Ovary (tissue), 10 donors: ENCODE measurements at regions of chr2 and their contacts with region 1.

Region 1: DNA sequence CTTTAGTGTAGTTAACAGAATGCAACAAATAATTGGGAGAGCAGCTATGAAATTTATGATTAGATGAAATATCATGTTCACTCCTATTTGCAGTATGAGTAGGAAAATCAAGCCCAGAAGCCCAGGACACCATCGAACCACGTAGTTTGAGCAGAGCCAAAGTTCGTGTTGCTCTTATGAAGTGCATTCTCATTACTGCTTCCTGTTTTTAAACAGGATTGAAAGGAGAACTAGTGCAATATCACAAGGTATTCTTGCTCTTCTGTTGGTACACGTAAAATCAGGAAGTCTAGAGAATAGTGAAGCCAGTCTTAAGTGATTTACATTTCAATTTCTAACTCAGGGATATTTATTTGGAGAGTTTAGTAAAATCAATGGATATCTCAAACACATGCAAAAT is 21.1 kb downstream of the ARHGAP15 start:
- DNase-seq: no peak
- H3K4me3 ChIP-seq: no peak overlapping the region
- H3K27ac ChIP-seq: no peak overlapping the region
- H3K4me1 ChIP-seq: no peaks in the 10 kb centered on the region
- H3K27me3 ChIP-seq: no peaks in the 10 kb centered on the region
- CTCF ChIP-seq: no peak
- EP300 ChIP-seq: no peak
- POLR2A ChIP-seq: no peak

Region 2: DNA sequence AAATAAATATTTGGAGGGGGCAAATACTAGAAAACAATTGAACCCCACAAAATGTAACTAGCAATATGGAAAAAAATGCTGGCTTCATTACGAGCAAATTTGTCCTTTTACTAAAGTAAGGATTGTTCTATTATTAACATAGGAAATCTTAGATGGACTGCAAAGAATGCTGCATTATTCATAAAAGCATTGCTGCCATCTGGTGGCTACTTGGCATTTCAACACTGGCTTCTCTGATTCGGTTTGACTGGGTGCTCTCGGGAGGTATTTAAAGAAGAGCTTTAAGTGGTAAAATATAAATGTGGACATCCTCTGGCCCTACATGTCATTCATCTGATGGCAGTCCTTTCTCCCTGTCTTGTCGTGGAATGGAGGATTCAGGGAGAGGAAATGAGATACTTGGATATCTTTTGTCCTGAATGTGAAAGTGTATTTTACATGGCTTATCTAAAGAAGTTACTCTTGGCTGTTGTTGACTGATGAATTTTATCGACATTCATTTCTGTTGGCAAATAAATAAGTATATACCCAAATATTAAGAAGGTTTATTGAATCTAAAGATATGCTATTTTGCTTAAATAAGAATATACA is 109.2 kb after region 1 on chr2:
- intact Hi-C with region 1: loop called in 1 of 4 experiments (anchors 5 kb)
- DNase-seq: peak; percentile 30 to 69 (median 52)
- H3K4me3 ChIP-seq: no peak overlapping the region
- H3K27ac ChIP-seq: no peak overlapping the region
- H3K4me1 ChIP-seq: no peaks in the 10 kb centered on the region
- H3K27me3 ChIP-seq: no peaks in the 10 kb centered on the region
- CTCF ChIP-seq: peak; percentile 37 to 40 (median 38)
- EP300 ChIP-seq: no peak
- POLR2A ChIP-seq: no peak